ENCODE measurements at regions of chr15 and their contacts with region 1.

Region 1: GRCh38 chr15:92903941-92904831 is 4.1 kb downstream of the CHD2 start:
- DNase-seq: peak; percentile 99
- H3K4me3 ChIP-seq: peak overlapping the region; percentile 55 to 73 (median 62)
- H3K27ac ChIP-seq: peak overlapping the region; percentile 97 to 99
- H3K4me1 ChIP-seq: peaks cover 0 to 10% of the 10 kb centered on the region in 2 donors
- H3K27me3 ChIP-seq: no peaks in the 10 kb centered on the region
- CTCF ChIP-seq: peak; percentile 15 to 33 (median 17)
- POLR2A ChIP-seq: peak; percentile 67

Region 2: GRCh38 chr15:92020765-92021164 is 883.4 kb before region 1 on chr15:
- intact Hi-C with region 1: loop called (anchors 10 kb)
- DNase-seq: no peak
- H3K4me3 ChIP-seq: no peak overlapping the region
- H3K27ac ChIP-seq: peak overlapping the region; percentile 4 to 72
- H3K4me1 ChIP-seq: peaks cover 0 to 2% of the 10 kb centered on the region in 2 donors
- H3K27me3 ChIP-seq: no peaks in the 10 kb centered on the region
- CTCF ChIP-seq: no peak
- POLR2A ChIP-seq: no peak

Region 3: DNA sequence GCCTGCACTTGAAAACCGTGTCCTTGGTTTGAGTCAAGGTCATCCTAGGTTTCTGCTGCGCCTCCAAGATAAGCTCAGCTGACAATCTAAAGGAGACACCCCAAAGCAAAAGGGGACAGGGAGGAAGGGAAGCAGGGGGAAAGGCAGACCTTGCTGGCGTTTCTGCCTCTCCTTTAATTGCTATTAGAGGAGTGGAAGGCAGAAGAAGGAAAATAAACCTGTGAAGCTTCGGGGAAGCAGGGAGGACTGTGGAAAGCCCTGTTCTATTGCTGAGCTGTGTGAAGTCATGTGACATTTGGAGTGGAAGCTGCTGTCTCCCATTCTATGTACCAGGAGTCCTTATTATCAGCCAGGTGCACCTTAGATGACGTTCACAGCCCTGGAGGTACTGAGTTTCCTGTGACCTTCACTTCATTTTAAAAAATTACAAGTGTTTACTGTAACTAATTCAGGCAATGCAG is 25.6 kb before region 1 on chr15:
- intact Hi-C with region 1: no loop called
- DNase-seq: no peak
- H3K4me3 ChIP-seq: no peak overlapping the region
- H3K27ac ChIP-seq: no peak overlapping the region
- H3K4me1 ChIP-seq: peaks cover 5 to 6% of the 10 kb centered on the region in 2 donors
- H3K27me3 ChIP-seq: no peaks in the 10 kb centered on the region
- CTCF ChIP-seq: no peak
- POLR2A ChIP-seq: no peak

Measured in breast epithelium (tissue), 4 donors.